ENCODE measurements at regions of chr1 and their contacts with region 1.

Region 1: GRCh38 chr1:203504397-203505250 is 10.7 kb downstream of the OPTC start:
- DNase-seq: peak; percentile 77 to 95 (median 88)
- H3K4me3 ChIP-seq: no peak overlapping the region
- H3K27ac ChIP-seq: no peak overlapping the region
- H3K4me1 ChIP-seq: peaks cover 7 to 22% of the 10 kb centered on the region in 2 donors
- H3K27me3 ChIP-seq: no peaks in the 10 kb centered on the region
- CTCF ChIP-seq: peak; percentile 75 to 93 (median 84)
- POLR2A ChIP-seq: no peak

Region 2: GRCh38 chr1:203625628-203626019 is 121.0 kb after region 1 on chr1:
- intact Hi-C with region 1: loop called (anchors 10 kb)
- DNase-seq: peak in 4 of 7 donors; percentile 32 to 69 (median 48)
- H3K4me3 ChIP-seq: peak overlapping the region in 1 of 4 donors; percentile 78
- H3K27ac ChIP-seq: peak overlapping the region in 2 of 5 donors; percentile 79 to 83
- H3K4me1 ChIP-seq: peaks cover 32 to 34% of the 10 kb centered on the region in 2 donors
- H3K27me3 ChIP-seq: no peaks in the 10 kb centered on the region
- CTCF ChIP-seq: peak in 3 of 6 experiments; percentile 18 to 40 (median 33)
- POLR2A ChIP-seq: no peak

Region 3: DNA sequence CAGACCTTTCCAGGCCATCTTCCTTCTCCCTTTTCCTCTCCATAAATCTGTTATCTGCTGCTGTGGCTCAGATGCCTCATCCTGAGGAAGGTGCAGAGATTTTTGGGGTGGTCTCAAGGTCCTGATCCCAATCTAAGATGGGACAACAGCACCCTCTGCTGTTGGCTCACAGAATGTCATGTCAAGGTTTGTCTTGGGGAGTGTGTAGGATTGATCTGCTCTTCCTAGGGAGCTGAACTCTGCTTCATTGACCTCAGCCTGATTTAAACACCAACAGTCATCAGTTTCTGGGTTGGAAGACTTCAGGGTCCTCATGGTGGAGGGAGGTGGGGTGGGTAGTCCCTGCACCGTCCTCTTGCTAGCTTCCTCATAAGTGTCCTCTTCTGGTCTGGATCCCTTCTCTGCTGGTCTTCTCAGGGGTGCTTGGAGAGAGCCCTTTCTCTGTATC is 197.5 kb after region 1 on chr1:
- intact Hi-C with region 1: loop called (anchors 2 kb)
- DNase-seq: peak; percentile 23 to 76 (median 50)
- H3K4me3 ChIP-seq: no peak overlapping the region
- H3K27ac ChIP-seq: no peak overlapping the region
- H3K4me1 ChIP-seq: peaks cover 0 to 6% of the 10 kb centered on the region in 2 donors
- H3K27me3 ChIP-seq: no peaks in the 10 kb centered on the region
- CTCF ChIP-seq: peak; percentile 74 to 98 (median 90)
- POLR2A ChIP-seq: no peak

Measured in adrenal gland (tissue), 19 donors.